Activated T-helper 2 cell treated with anti-CD3 and anti-CD28 coated beads, Interferon-gamma antibody, Interleukin-2, Interleukin-4, amounts not matched to agents 10 μg/mL and 5 μg/mL and 100 μg/mL, durations not matched to agents 14 hours and 24 hours and 36 hours (primary cell): ENCODE measurements at regions of chr1 and their contacts with region 1.

Region 1: GRCh38 chr1:156193488-156194299 is at the start of gene SLC25A44:
- DNase-seq: peak; percentile 97
- H3K4me3 Mint-ChIP-seq: peak within 1 kb of the TSS; percentile 95
- H3K27ac Mint-ChIP-seq: peak within 1 kb of the TSS; percentile 91
- H3K4me1 Mint-ChIP-seq: peaks cover 54% of the 10 kb centered on the region
- H3K27me3 Mint-ChIP-seq: no peaks in the 10 kb centered on the region
- total RNA-seq, gene SLC25A44: 62.6 and 63.7 TPM in 2 replicates

Region 2: DNA sequence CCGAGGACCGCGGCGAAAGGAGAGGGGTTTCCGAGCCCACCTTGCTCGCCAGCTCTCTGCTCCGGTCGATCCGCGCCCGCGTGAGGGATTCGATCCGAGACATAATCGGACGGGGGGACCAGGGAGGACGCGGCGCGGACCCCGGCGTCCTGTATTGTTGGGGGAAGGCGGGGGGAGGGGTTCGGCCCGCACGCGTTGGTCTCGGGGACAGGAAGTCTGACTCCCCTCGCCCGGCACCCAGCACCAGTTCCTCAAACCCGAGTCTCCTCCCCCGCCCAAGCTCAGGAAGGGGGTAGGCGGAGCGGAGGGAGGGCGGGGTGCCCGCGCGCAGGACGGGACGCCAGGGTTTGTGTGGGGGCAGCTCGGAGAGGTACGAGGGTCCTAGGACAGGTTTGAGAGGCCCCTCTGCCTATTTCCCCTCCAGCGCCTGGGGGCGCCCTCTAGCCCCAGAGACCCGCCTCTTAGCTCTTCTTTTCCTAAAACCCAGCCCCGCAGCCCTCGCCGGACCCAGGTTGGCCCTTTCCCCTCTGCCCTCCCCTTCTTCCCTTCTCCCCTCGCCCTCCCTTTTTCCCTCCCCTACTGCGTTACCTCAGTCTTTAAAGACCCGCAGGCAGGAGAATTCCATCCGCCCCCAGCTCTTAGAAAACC is 215.2 kb before region 1 on chr1 and contains the start of gene ARHGEF2:
- intact Hi-C with region 1: loop called (anchors 10 kb)
- DNase-seq: peak; percentile 71
- H3K4me3 Mint-ChIP-seq: peak within 1 kb of the TSS; percentile 95
- H3K27ac Mint-ChIP-seq: peak within 1 kb of the TSS; percentile 95
- H3K4me1 Mint-ChIP-seq: peaks cover 55% of the 10 kb centered on the region
- H3K27me3 Mint-ChIP-seq: no peaks in the 10 kb centered on the region
- total RNA-seq, gene ARHGEF2: 211 and 216 TPM in 2 replicates

Region 3: GRCh38 chr1:156154317-156154749 is 39.4 kb before region 1 on chr1:
- intact Hi-C with region 1: loop called (anchors 5 kb)
- DNase-seq: peak; percentile 46
- H3K4me3 Mint-ChIP-seq: peak overlapping the region; percentile 92
- H3K27ac Mint-ChIP-seq: peak overlapping the region; percentile 89
- H3K4me1 Mint-ChIP-seq: peaks cover 75% of the 10 kb centered on the region
- H3K27me3 Mint-ChIP-seq: no peaks in the 10 kb centered on the region

Region 4: DNA sequence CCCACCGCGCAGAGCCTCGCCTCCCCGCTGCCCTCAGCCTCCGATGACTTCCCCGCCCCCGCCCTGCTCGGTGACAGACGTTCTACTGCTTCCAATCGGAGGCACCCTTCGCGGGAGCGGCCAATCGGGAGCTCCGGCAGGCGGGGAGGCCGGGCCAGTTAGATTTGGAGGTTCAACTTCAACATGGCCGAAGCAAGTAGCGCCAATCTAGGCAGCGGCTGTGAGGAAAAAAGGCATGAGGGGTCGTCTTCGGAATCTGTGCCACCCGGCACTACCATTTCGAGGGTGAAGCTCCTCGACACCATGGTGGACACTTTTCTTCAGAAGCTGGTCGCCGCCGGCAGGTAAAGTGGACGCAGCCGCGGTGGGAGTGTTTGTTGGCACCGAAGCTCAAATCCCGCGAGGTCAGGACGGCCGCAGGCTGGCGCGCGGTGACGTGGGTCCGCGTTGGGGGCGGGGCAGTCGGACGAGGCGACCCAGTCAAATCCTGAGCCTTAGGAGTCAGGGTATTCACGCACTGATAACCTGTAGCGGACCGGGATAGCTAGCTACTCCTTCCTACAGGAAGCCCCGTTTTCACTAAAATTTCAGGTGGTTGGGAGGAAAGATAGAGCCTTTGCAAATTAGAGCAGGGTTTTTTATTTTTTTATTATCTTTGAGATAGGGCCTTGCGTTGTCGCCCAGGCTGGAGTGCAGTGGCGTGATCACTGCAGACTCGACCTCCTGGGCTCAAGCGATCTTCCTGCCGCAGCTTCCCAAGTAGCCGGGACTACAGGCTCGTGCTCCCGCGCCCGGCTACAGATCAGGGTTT is 19.3 kb after region 1 on chr1 and contains the start of gene PMF1:
- intact Hi-C with region 1: loop called (anchors 1 kb)
- DNase-seq: peak; percentile 95
- H3K4me3 Mint-ChIP-seq: peak within 1 kb of the TSS; percentile 93
- H3K27ac Mint-ChIP-seq: peak within 1 kb of the TSS; percentile 98
- H3K4me1 Mint-ChIP-seq: peaks cover 31% of the 10 kb centered on the region
- H3K27me3 Mint-ChIP-seq: no peaks in the 10 kb centered on the region
- total RNA-seq, gene PMF1: 115 and 117 TPM in 2 replicates

Region 5: DNA sequence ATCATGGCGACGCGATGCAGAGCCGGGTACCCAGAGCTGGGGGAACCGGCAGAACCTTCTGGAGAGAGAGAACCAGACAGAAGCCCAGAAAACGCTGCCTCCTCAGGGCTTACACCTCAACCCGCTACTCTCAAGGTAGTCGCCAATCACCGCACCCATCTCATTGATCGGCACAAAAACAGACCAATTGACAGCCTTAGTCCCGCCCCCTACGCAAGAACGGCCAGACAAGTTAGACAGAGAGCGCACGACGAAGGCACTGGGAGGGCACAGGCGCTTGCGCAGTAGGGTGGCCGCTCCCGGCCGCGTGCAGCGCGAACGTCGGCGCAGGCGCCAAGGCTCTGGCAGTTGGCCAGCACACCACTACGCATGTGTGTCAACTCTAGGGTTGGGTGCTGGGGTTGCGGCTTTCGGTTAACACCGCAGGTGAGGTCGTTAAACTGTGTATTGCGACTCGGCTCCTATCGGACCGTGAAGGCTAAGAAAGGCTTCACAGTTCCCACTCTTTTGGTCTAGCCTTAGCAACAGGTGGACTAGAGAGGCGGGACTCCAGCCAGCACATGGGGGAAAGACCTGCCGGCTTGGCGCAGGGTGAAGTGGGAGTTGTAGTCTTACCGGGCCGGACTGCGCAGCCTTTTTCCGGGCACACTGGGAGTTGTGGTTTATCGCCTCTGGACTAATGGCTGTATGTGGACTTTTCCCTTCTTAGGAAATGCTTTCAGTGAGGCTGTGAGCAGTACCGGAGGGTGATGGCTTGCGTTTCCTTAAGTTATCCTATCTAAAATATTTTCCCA is 144.7 kb after region 1 on chr1 and contains the starts of genes CCT3 and TSACC:
- intact Hi-C with region 1: loop called (anchors 5 kb)
- DNase-seq: peak; percentile 99
- H3K4me3 Mint-ChIP-seq: peak within 1 kb of the TSS; percentile 99
- H3K27ac Mint-ChIP-seq: peak within 1 kb of the TSS; percentile 96
- H3K4me1 Mint-ChIP-seq: peaks cover 23% of the 10 kb centered on the region
- H3K27me3 Mint-ChIP-seq: peaks cover 2% of the 10 kb centered on the region
- total RNA-seq, gene CCT3: 504 and 517 TPM in 2 replicates
- total RNA-seq, gene TSACC: 0.39 TPM in 1 of 2 replicates, not detected in the other

Region 6: DNA sequence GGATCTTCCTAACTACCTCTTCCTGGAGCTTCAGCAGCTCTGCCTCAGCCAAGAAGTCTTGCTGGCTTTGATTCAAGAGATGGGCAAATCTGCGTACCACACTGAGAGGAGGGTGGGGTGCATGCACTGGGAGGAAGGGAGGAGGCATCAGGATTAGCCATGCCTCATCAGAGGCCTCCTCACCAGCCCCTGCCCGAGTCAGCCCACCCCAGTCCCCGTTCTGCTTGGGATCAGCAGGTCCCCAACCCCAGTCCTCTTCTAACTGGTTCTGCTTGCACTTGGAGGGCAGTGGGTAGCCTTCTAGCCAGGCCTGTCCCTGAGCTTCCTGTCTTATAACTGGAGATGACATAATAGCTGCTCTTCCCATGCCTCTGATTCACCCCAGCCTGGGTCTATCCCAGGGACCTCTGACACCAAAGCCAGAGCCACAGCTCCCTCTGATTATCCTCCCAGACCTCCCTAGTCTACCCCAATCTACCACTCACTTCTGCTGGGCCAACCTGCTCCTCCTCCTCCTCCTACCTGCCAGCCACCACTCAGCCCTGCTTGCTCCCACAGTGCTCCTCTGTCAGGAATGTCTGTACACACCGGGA is 347.2 kb after region 1 on chr1:
- intact Hi-C with region 1: no loop called
- DNase-seq: no peak
- H3K4me3 Mint-ChIP-seq: no peak overlapping the region
- H3K27ac Mint-ChIP-seq: no peak overlapping the region
- H3K4me1 Mint-ChIP-seq: peaks cover 9% of the 10 kb centered on the region
- H3K27me3 Mint-ChIP-seq: no peaks in the 10 kb centered on the region